Mammary epithelial cell (primary cell): ENCODE measurements at regions of chr5 and their contacts with region 1.

Region 1: GRCh38 chr5:51279983-51280706 is 103.1 kb upstream of the ISL1 start:
- DNase-seq: no peak
- H3K4me3 ChIP-seq: no peak overlapping the region
- H3K27ac ChIP-seq: no peak overlapping the region
- H3K4me1 ChIP-seq: no peaks in the 10 kb centered on the region
- H3K27me3 ChIP-seq: no peaks in the 10 kb centered on the region
- CTCF ChIP-seq: no peak

Region 2: GRCh38 chr5:51242453-51242852 is 37.7 kb before region 1 on chr5:
- CTCF ChIA-PET with region 1: no interaction called
- dilution Hi-C with region 1: loop called (anchors 5 kb)
- in situ Hi-C with region 1: no loop called
- intact Hi-C with region 1: no loop called
- DNase-seq: no peak
- H3K4me3 ChIP-seq: no peak overlapping the region
- H3K27ac ChIP-seq: no peak overlapping the region
- H3K4me1 ChIP-seq: no peaks in the 10 kb centered on the region
- H3K27me3 ChIP-seq: no peaks in the 10 kb centered on the region
- CTCF ChIP-seq: no peak

Region 3: GRCh38 chr5:51404256-51404655 is 124.1 kb after region 1 on chr5:
- CTCF ChIA-PET with region 1: no interaction called
- dilution Hi-C with region 1: no loop called
- in situ Hi-C with region 1: no loop called
- intact Hi-C with region 1: no loop called
- DNase-seq: no peak
- H3K4me3 ChIP-seq: no peak overlapping the region
- H3K27ac ChIP-seq: no peak overlapping the region
- H3K4me1 ChIP-seq: no peaks in the 10 kb centered on the region
- H3K27me3 ChIP-seq: peaks cover 20% of the 10 kb centered on the region
- CTCF ChIP-seq: no peak